ENCODE measurements at regions of chr4 and their contacts with region 1.

Region 1: GRCh38 chr4:128863312-128864075 is 54.0 kb downstream of the JADE1 start:
- DNase-seq: peak; percentile 53 to 61
- ATAC-seq: peak; percentile 70 to 84
- H3K4me3 ChIP-seq: no peak overlapping the region
- H3K27ac ChIP-seq: no peak overlapping the region
- H3K4me1 ChIP-seq: no peaks in the 10 kb centered on the region
- H3K27me3 ChIP-seq: no peaks in the 10 kb centered on the region
- CTCF ChIP-seq: peak; percentile 68 to 91 (median 88)
- POLR2A ChIP-seq: no peak

Region 2: GRCh38 chr4:127880764-127881562 is 982.5 kb before region 1 on chr4 and contains the start of gene PLK4:
- in situ Hi-C with region 1: loop called in 1 of 4 experiments (anchors 10 kb)
- intact Hi-C with region 1: no loop called
- DNase-seq: peak; percentile 79 to 83
- ATAC-seq: peak; percentile 96 to 98
- H3K4me3 ChIP-seq: peak within 1 kb of the TSS; percentile 63 to 83 (median 74)
- H3K27ac ChIP-seq: peak within 1 kb of the TSS; percentile 6 to 65 (median 59)
- H3K4me1 ChIP-seq: peaks cover 7 to 10% of the 10 kb centered on the region in 2 donors
- H3K27me3 ChIP-seq: no peaks in the 10 kb centered on the region
- CTCF ChIP-seq: no peak
- POLR2A ChIP-seq: peak in 1 of 2 donors; percentile 4
- total RNA-seq, gene PLK4: 0.11 to 0.98 TPM in 2 of 4 donors, not detected in the others

Region 3: GRCh38 chr4:128379860-128380259 is 483.6 kb before region 1 on chr4:
- in situ Hi-C with region 1: no loop called
- intact Hi-C with region 1: loop called (anchors 10 kb)
- DNase-seq: peak in 1 of 2 donors; percentile 47
- ATAC-seq: peak; percentile 53 to 91
- H3K4me3 ChIP-seq: no peak overlapping the region
- H3K27ac ChIP-seq: no peak overlapping the region
- H3K4me1 ChIP-seq: peaks cover 0 to 6% of the 10 kb centered on the region in 2 donors
- H3K27me3 ChIP-seq: no peaks in the 10 kb centered on the region
- CTCF ChIP-seq: peak; percentile 47 to 72 (median 52)
- POLR2A ChIP-seq: no peak

Region 4: DNA sequence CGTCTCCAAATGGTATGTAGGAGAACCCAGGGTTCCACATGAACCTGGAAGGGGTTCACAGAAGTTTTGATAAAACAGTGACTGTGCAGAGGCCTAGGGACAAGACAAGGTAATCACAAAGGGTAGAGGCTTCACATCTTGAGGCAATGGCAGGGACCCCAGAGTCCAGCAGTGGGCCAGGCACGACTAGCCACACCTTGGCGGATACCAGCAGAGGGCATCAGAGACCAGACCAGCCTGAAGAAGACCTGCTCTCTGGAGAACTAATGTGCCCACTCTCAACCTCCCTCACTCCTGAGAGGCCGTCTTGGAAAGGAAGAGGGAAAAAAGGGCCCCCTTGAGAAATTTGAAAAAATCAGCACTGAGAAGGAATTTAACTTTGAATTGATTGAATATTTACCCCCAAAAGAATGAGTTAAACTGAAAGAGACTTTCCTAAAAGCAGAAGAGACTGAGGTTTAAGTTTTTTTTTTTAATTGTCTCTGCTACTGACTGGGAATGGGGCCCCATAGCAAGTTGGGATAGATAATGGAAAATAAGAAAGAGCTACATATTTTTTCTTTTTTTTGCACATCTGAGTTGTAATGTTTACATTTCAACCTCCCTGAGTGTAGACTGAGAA is 297.8 kb before region 1 on chr4:
- in situ Hi-C with region 1: loop called in 2 of 4 experiments (anchors 10 kb)
- intact Hi-C with region 1: loop called (anchors 5 kb)
- DNase-seq: no peak
- ATAC-seq: peak in 1 of 2 donors; percentile 45
- H3K4me3 ChIP-seq: no peak overlapping the region
- H3K27ac ChIP-seq: no peak overlapping the region
- H3K4me1 ChIP-seq: peaks cover 3 to 11% of the 10 kb centered on the region in 2 donors
- H3K27me3 ChIP-seq: no peaks in the 10 kb centered on the region
- CTCF ChIP-seq: peak in 3 of 5 experiments; percentile 33 to 43 (median 38)
- POLR2A ChIP-seq: no peak

Region 5: GRCh38 chr4:129093191-129093920 is 229.9 kb after region 1 on chr4 and contains the start of gene SCLT1:
- in situ Hi-C with region 1: no loop called
- intact Hi-C with region 1: loop called (anchors 10 kb)
- DNase-seq: peak; percentile 98 to 99
- ATAC-seq: peak; percentile 99
- H3K4me3 ChIP-seq: peak within 1 kb of the TSS; percentile 78 to 89 (median 84)
- H3K27ac ChIP-seq: peak within 1 kb of the TSS; percentile 90 to 94 (median 94)
- H3K4me1 ChIP-seq: peaks cover 18 to 19% of the 10 kb centered on the region in 2 donors
- H3K27me3 ChIP-seq: no peaks in the 10 kb centered on the region
- CTCF ChIP-seq: peak in 1 of 5 experiments; percentile 13
- POLR2A ChIP-seq: peak; percentile 65 to 87
- total RNA-seq, gene SCLT1: 1.0 to 4.1 (median 1.8) TPM